CD14-positive monocyte (primary cell): ENCODE measurements at regions of chr9 and their contacts with region 1.

Region 1: DNA sequence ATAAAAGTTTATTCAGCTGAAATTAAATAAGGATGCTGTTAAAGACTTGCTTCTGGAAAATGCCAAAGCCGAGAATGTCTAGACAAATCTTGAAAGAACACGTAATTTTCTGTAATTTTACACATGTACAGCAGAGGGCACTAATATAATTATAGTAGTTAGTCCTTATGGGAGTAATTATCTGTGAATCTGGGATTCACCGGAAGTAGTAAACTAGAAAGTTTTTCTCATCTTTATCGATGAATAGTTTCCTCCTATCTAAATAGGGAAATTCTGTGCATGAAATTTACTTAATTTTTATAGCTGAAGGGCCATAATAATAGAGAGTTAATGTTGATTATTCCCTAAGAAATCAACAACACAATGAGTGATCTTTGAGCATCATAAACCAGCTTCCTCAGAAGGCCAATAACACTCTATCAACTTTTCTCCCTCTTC is 18.4 kb upstream of the CNTLN start:
- DNase-seq: peak in 2 of 3 donors; percentile 15 to 44
- H3K4me3 ChIP-seq: no peak overlapping the region
- H3K4me3 Mint-ChIP-seq: no peak overlapping the region
- H3K27ac ChIP-seq: no peak overlapping the region
- H3K27ac Mint-ChIP-seq: no peak overlapping the region
- H3K4me1 ChIP-seq: no peaks in the 10 kb centered on the region
- H3K4me1 Mint-ChIP-seq: no peaks in the 10 kb centered on the region
- H3K27me3 ChIP-seq: no peaks in the 10 kb centered on the region
- H3K27me3 Mint-ChIP-seq: peaks cover 0 to 5% (median 0%) of the 10 kb centered on the region in 3 donors
- CTCF ChIP-seq: peak; percentile 80

Region 2: DNA sequence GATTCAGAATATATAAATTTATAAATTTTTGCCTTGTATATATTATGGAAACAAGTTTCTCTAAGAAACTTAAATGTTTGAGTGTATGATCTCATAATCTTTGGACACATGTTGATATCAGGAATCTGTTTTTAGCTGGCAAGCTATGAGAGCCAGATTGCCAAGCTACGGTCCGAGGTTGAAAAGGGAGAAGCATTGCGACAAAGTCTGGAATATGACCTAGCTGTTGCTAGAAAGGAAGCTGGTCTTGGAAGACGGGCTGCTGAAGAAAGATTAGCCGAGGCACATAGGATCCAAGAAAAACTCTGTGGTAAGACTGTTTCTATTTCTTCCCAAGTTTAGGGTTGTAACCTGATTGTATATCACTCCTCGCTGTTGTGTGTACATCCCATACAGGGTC is 1537.7 kb before region 1 on chr9:
- intact Hi-C with region 1: no loop called
- DNase-seq: no peak
- H3K4me3 ChIP-seq: no peak overlapping the region
- H3K4me3 Mint-ChIP-seq: no peak overlapping the region
- H3K27ac ChIP-seq: no peak overlapping the region
- H3K27ac Mint-ChIP-seq: no peak overlapping the region
- H3K4me1 ChIP-seq: no peaks in the 10 kb centered on the region
- H3K4me1 Mint-ChIP-seq: no peaks in the 10 kb centered on the region
- H3K27me3 ChIP-seq: no peaks in the 10 kb centered on the region
- H3K27me3 Mint-ChIP-seq: peaks cover 0 to 2% (median 0%) of the 10 kb centered on the region in 3 donors
- CTCF ChIP-seq: no peak

Region 3: GRCh38 chr9:17191082-17191481 is 74.7 kb after region 1 on chr9:
- intact Hi-C with region 1: no loop called
- DNase-seq: no peak
- H3K4me3 ChIP-seq: no peak overlapping the region
- H3K4me3 Mint-ChIP-seq: no peak overlapping the region
- H3K27ac ChIP-seq: no peak overlapping the region
- H3K27ac Mint-ChIP-seq: no peak overlapping the region
- H3K4me1 ChIP-seq: no peaks in the 10 kb centered on the region
- H3K4me1 Mint-ChIP-seq: no peaks in the 10 kb centered on the region
- H3K27me3 ChIP-seq: no peaks in the 10 kb centered on the region
- H3K27me3 Mint-ChIP-seq: no peaks in the 10 kb centered on the region
- CTCF ChIP-seq: no peak

Region 4: GRCh38 chr9:17453751-17454150 is 337.3 kb after region 1 on chr9:
- intact Hi-C with region 1: loop called in 1 of 2 experiments (anchors 10 kb)
- DNase-seq: no peak
- H3K4me3 ChIP-seq: no peak overlapping the region
- H3K4me3 Mint-ChIP-seq: no peak overlapping the region
- H3K27ac ChIP-seq: no peak overlapping the region
- H3K27ac Mint-ChIP-seq: no peak overlapping the region
- H3K4me1 ChIP-seq: no peaks in the 10 kb centered on the region
- H3K4me1 Mint-ChIP-seq: peaks cover 2% of the 10 kb centered on the region
- H3K27me3 ChIP-seq: no peaks in the 10 kb centered on the region
- H3K27me3 Mint-ChIP-seq: no peaks in the 10 kb centered on the region
- CTCF ChIP-seq: no peak